Transverse colon (tissue), 4 donors: ENCODE measurements at regions of chr1 and their contacts with region 1.

Region 1: DNA sequence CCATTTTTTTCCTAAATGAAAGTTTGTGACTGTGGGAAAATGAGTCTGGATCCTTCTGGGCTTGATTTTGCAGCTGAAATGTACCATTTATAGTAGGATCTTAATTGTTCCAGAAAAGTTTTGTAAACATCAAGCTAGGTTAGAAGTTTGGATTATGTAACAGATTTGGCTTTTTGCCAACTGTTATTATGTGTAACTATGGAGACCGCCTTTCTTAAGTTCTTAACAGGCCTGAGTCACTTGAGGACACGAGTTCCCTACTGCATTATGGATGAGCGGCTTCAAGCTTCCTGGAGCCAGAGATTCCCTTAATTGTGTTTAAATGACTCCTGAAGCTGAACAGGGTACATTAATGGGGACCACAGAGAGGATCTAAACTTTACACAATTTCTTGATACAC is 22.2 kb downstream of the SLC25A33 start:
- DNase-seq: peak; percentile 45
- H3K4me3 ChIP-seq: no peak overlapping the region
- H3K27ac ChIP-seq: peak overlapping the region; percentile 53 to 69 (median 60)
- H3K4me1 ChIP-seq: peaks cover 9 to 33% (median 13%) of the 10 kb centered on the region in 4 donors
- H3K27me3 ChIP-seq: no peaks in the 10 kb centered on the region
- CTCF ChIP-seq: no peak
- EP300 ChIP-seq: no peak
- POLR2A ChIP-seq: no peak

Region 2: DNA sequence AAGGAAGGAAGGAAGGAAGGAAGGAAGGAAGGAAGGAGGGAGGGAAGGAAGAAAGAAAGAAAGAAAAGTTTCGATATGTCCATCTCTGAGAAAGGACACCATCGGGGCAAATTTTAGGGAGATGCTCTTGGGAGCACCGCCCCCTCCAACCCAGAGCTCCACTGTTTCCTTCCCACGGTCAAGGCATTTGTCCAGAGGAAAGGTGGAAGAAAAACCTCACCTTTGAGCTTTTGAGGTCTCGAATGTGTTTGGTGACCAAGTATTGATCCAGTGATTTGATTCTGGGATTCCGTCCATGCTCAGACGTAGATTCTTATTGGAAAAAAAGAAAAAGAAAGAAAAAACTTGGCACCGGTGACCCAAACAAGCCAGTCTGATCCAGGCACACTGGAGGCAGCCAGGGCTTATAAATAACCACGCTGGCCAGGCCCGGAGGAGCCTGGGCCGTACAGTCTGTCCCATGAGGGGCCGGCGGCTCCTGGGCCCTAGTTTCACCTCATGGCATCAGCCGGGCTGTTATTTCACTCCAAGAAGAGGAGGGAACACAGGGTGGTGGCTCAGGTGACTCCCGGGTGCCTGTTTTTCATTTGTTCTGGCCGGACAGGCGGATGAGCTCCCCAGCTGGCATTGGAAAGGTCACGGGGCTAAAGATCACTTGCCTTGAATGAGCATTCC is 58.3 kb before region 1 on chr1:
- in situ Hi-C with region 1: loop called in 1 of 4 experiments (anchors 10 kb)
- intact Hi-C with region 1: no loop called
- DNase-seq: no peak
- H3K4me3 ChIP-seq: no peak overlapping the region
- H3K27ac ChIP-seq: no peak overlapping the region
- H3K4me1 ChIP-seq: no peaks in the 10 kb centered on the region
- H3K27me3 ChIP-seq: no peaks in the 10 kb centered on the region
- CTCF ChIP-seq: no peak
- EP300 ChIP-seq: no peak
- POLR2A ChIP-seq: no peak